HepG2 (cell line): ENCODE measurements at regions of chr1 and their contacts with region 1.

Region 1: GRCh38 chr1:217425422-217425821 is 205.5 kb downstream of the GPATCH2 start:
- DNase-seq: no peak
- ATAC-seq: no peak
- H3K4me3 ChIP-seq: no peak overlapping the region
- H3K27ac ChIP-seq: no peak overlapping the region
- H3K4me1 ChIP-seq: no peaks in the 10 kb centered on the region
- H3K27me3 ChIP-seq: no peaks in the 10 kb centered on the region
- CTCF ChIP-seq: no peak
- EP300 ChIP-seq: no peak
- POLR2A ChIP-seq: no peak
- RAD21 ChIP-seq: no peak

Region 2: GRCh38 chr1:217437375-217437774 is 12.0 kb after region 1 on chr1:
- CTCF ChIA-PET with region 1: no interaction called
- POLR2A ChIA-PET with region 1: no interaction called
- in situ Hi-C with region 1: no loop called
- intact Hi-C with region 1: no loop called
- DNase-seq: no peak
- ATAC-seq: no peak
- H3K4me3 ChIP-seq: no peak overlapping the region
- H3K27ac ChIP-seq: no peak overlapping the region
- H3K4me1 ChIP-seq: no peaks in the 10 kb centered on the region
- H3K27me3 ChIP-seq: no peaks in the 10 kb centered on the region
- CTCF ChIP-seq: no peak
- EP300 ChIP-seq: no peak
- POLR2A ChIP-seq: no peak
- RAD21 ChIP-seq: no peak

Region 3: DNA sequence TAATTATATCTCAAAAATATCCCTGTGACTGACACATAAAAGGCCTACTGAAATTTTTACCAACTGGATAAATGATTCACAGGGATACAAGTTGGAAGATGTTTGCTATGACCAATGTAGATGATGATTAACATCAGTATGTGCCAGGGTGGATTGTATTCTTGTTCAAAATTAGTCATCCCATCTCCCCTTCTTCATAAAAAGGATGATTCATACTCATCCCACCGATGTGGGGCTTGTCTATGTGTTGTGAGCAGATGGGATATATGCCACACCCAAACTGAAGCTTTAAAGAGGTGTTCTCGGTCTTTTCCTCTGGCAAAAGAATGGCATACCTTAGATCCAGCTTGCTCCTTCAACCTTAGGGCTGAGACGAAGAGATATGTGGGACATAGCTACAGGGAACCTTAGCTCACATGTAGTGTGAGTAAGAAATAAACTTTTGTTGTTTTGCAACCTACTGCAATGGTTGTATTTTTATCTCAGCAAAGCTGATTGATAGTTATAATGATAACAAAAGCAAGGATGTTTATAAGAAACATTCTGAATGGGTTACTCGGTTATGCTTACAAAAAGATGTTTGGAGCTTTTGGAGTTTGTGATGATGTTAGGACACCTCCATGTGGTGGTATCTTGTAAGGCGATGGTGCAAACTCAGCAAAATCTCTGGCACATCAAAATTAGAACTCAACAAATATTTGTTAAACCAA is 235.1 kb after region 1 on chr1:
- CTCF ChIA-PET with region 1: no interaction called
- POLR2A ChIA-PET with region 1: no interaction called
- in situ Hi-C with region 1: no loop called
- intact Hi-C with region 1: loop called (anchors 10 kb)
- DNase-seq: peak; percentile 8
- ATAC-seq: no peak; the same call in 2 of the 3 replicates
- H3K4me3 ChIP-seq: no peak overlapping the region
- H3K27ac ChIP-seq: no peak overlapping the region
- H3K4me1 ChIP-seq: no peaks in the 10 kb centered on the region
- H3K27me3 ChIP-seq: no peaks in the 10 kb centered on the region
- CTCF ChIP-seq: peak; percentile 64
- EP300 ChIP-seq: no peak
- POLR2A ChIP-seq: no peak
- RAD21 ChIP-seq: no peak